Mammary epithelial cell (primary cell): ENCODE measurements at regions of chr15 and their contacts with region 1.

Region 1: GRCh38 chr15:29925227-29926082 is 103.2 kb upstream of the TJP1 start:
- DNase-seq: peak; percentile 93
- H3K4me3 ChIP-seq: no peak overlapping the region
- H3K27ac ChIP-seq: peak overlapping the region; percentile 76
- H3K4me1 ChIP-seq: peaks cover 42% of the 10 kb centered on the region
- H3K27me3 ChIP-seq: no peaks in the 10 kb centered on the region
- CTCF ChIP-seq: peak; percentile 56 to 62

Region 2: DNA sequence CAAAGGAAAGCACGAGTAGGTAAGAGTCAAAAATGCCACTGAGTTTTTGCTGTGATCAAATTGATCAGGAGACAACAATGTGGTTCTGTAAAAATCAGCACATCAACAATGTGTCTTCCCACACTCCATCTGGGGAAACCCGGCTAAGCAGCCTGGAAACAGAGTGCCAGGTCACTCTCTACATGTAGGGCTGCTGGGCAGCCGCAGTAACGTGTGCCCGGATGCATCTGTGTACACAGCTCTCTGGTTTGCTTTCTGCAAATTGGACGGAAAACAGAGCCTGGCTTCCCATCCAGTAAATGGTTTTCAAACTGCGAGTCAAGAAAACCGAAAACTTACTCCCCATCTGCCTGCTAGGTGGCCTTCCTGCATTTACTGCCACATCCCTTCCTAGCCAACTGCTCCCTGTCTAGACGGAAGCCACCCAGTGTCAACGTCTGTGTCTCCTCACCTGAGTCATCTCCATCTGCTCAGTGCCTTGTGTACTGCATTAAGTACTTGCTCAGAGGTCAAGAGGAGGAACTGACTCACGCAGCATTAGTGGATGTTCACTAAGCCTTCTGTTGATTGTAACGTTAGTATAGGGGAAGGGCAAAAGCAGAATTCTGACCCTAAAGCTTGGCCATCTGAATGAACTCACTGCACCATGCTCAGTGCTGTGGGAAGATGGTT is 227.3 kb before region 1 on chr15:
- CTCF ChIA-PET with region 1: no interaction called
- dilution Hi-C with region 1: no loop called
- in situ Hi-C with region 1: loop called in 1 of 2 experiments (anchors 10 kb)
- intact Hi-C with region 1: no loop called
- DNase-seq: peak; percentile 81
- H3K4me3 ChIP-seq: no peak overlapping the region
- H3K27ac ChIP-seq: no peak overlapping the region
- H3K4me1 ChIP-seq: no peaks in the 10 kb centered on the region
- H3K27me3 ChIP-seq: no peaks in the 10 kb centered on the region
- CTCF ChIP-seq: no peak

Region 3: GRCh38 chr15:29945943-29946596 is 20.6 kb after region 1 on chr15:
- CTCF ChIA-PET with region 1: no interaction called
- dilution Hi-C with region 1: no loop called
- in situ Hi-C with region 1: no loop called
- intact Hi-C with region 1: loop called (anchors 1 kb)
- DNase-seq: peak; percentile 97
- H3K4me3 ChIP-seq: no peak overlapping the region
- H3K27ac ChIP-seq: peak overlapping the region; percentile 80
- H3K4me1 ChIP-seq: peaks cover 19% of the 10 kb centered on the region
- H3K27me3 ChIP-seq: no peaks in the 10 kb centered on the region
- CTCF ChIP-seq: no peak

Region 4: DNA sequence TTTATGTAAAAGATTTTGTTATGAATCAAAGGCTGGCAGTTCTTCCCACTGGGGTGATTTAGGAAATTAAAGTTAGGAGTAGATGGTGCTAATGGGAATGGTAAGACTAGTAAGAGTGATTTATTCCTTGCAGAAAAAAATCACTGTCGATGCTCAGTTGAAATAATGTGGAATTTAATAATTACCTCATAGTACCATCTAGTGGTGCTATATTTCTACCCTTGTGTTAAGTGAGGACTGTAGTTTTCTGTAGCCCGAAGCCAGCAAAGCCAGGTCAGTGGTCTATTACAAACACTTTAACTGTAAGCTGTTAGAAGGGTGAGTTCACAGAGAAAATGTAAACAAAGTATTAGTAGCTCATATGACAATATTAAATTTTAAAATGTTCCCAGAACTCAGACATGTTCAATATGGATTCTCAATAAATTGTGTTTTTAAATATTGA is 117.8 kb after region 1 on chr15:
- CTCF ChIA-PET with region 1: no interaction called
- dilution Hi-C with region 1: no loop called
- in situ Hi-C with region 1: no loop called
- intact Hi-C with region 1: loop called (anchors 10 kb)
- DNase-seq: no peak
- H3K4me3 ChIP-seq: no peak overlapping the region
- H3K27ac ChIP-seq: no peak overlapping the region
- H3K4me1 ChIP-seq: no peaks in the 10 kb centered on the region
- H3K27me3 ChIP-seq: no peaks in the 10 kb centered on the region
- CTCF ChIP-seq: peak; percentile 23 to 45